Activated T-helper 2 cell treated with anti-CD3 and anti-CD28 coated beads, Interferon-gamma antibody, Interleukin-2, Interleukin-4, amounts not matched to agents 10 μg/mL and 5 μg/mL and 100 μg/mL, durations not matched to agents 14 hours and 24 hours and 36 hours (primary cell): ENCODE measurements at regions of chr2 and their contacts with region 1.

Region 1: GRCh38 chr2:88590998-88591613 is 36.2 kb downstream of the EIF2AK3 start:
- DNase-seq: no peak
- H3K4me3 Mint-ChIP-seq: no peak overlapping the region
- H3K27ac Mint-ChIP-seq: no peak overlapping the region
- H3K4me1 Mint-ChIP-seq: peaks cover 3% of the 10 kb centered on the region
- H3K27me3 Mint-ChIP-seq: no peaks in the 10 kb centered on the region

Region 2: GRCh38 chr2:88239781-88240180 is 351.3 kb before region 1 on chr2:
- intact Hi-C with region 1: no loop called
- DNase-seq: no peak
- H3K4me3 Mint-ChIP-seq: no peak overlapping the region
- H3K27ac Mint-ChIP-seq: no peak overlapping the region
- H3K4me1 Mint-ChIP-seq: no peaks in the 10 kb centered on the region
- H3K27me3 Mint-ChIP-seq: peaks cover 2% of the 10 kb centered on the region

Region 3: GRCh38 chr2:88669371-88670214 is 78.5 kb after region 1 on chr2:
- intact Hi-C with region 1: loop called (anchors 1 kb)
- DNase-seq: no peak
- H3K4me3 Mint-ChIP-seq: no peak overlapping the region
- H3K27ac Mint-ChIP-seq: no peak overlapping the region
- H3K4me1 Mint-ChIP-seq: peaks cover 7% of the 10 kb centered on the region
- H3K27me3 Mint-ChIP-seq: peaks cover 7% of the 10 kb centered on the region